ENCODE measurements at regions of chrX and their contacts with region 1.

Region 1: DNA sequence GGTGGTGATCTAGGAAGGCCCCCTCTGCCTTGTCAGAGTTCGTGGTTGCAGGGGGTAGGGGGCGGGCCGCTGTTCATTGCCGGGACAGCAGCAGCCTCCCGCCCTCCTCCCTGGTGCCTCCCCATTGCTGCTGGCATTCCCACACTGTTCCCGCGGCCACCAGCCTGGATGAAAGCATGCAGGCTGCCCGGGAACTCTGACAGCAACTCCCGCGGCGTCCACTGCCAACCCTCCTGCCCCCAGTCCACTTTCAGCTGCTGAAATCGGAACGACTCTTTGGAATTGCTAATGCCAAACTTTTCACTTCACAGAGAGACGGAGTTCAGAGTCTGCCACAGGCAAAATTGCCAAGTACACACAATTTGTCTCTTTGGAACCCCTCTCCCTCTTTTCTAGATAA is 121.9 kb downstream of the BEND2 start:
- DNase-seq: no peak

Region 2: DNA sequence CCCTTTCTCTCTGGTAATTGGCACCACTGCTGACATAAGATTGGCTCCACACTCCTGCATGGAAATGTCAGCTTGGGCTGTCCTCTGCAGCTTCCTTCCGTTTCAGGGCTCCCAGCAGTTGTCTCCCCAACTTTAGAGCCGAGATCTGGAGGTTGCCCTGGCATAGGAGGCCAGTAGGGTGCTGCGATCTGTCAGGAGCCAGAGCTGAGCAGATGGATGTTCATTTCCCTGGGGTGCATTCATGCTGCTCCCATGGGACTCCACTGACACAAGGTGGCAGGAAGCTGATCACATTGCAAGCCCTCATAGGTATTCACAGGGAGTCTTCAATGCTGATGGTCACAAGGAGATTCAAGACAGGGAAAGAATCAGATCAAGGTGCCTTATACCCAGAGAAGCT is 121.1 kb before region 1 on chrX:
- intact Hi-C with region 1: no loop called
- DNase-seq: no peak

Region 3: GRCh38 chrX:18149454-18149853 is 50.7 kb after region 1 on chrX:
- intact Hi-C with region 1: loop called (anchors 2 kb)
- DNase-seq: no peak

Measured in cardiac septum (tissue), 1 donor.